Caki2 (cell line): ENCODE measurements at regions of chr6 and their contacts with region 1.

Region 1: DNA sequence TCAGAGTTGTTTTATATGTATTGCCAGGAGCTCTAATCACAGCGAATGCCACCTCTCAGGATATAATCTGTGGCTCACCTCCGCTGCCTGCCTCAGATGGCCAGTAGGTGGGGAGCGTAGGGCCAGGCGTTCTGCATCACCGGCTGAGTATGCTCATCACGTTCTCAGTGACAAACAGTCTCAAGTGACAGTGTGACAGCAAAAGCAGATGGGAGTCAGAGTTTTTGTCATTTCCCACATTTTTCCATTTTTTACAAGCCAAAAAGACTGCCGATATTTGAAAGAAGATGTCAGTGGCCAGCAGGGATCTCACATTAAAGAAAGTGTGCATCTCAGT is 208.7 kb downstream of the ALDH8A1 start:
- DNase-seq: peak; percentile 60

Region 2: DNA sequence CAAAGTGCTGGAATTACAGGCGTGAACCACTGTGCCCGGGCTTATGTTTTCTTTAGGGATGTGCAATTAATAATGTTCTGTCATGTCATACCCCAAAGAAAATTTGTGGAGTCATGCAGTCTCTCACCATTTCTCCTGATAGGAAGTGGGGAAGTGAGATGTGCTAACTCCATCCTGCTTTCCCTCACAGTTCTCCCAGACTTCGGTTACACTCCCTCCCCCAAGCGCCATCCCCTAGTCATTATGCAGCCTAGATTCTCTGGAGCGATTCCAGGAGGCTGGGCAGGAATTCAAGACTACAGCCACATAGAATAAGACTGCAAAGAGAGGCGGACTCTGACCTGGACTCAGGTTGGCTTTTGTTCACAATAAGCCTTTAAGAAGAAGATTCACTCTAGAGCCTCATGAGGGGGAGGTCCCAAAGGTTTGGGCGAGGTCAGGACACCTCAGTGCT is 62.7 kb before region 1 on chr6:
- in situ Hi-C with region 1: loop called (anchors 5 kb)
- DNase-seq: peak; percentile 88